ENCODE measurements at regions of chr4 and their contacts with region 1.

Region 1: DNA sequence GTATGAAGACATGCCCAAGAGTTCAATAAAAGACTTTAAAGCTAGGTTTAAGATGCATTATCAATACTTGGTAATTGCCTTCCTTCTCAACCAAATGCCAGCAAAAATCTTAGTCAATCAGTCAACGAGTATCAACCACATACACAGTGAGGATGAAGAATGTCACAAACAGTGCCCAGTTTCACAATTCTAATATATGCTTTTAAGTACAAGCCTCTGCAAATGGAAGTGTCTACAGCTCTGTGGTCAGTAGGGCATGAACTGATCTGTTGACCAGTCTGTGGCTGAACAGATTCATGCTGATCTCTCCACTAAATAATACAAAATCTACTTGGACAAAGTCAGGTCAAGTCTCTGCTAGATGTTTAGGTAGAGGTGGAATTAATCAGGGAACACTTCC is 27.9 kb downstream of the PPARGC1A start:
- DNase-seq: no peak

Region 2: GRCh38 chr4:23828020-23828715 is 33.7 kb before region 1 on chr4:
- intact Hi-C with region 1: no loop called
- DNase-seq: no peak

Region 3: GRCh38 chr4:23970201-23970850 is 108.4 kb after region 1 on chr4:
- intact Hi-C with region 1: no loop called
- DNase-seq: no peak

Region 4: DNA sequence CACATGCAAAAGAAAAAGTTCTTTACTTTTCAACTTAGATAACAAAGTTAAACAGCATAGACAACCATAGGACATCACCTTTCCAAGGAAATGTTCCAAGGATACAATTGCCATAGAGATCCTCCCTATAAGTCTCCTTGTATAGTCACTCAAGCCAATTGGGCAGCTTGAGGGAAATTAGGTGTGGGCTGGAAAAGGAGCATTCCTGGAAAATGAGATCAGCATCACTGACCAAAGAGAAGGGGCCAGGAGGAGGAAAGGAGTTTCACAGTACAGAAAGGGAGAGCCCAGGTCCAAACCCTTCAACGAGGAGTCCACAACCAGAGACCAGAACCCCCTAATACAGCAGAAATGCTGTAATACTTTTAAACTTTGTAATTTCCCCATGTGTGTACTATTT is 119.4 kb after region 1 on chr4:
- intact Hi-C with region 1: no loop called
- DNase-seq: no peak

Region 5: GRCh38 chr4:25760518-25761157 is 1898.7 kb after region 1 on chr4:
- intact Hi-C with region 1: loop called in 1 of 2 experiments (anchors 5 kb)
- DNase-seq: no peak

Measured in posterior vena cava (tissue), 2 donors.